ENCODE measurements at regions of chr1 and their contacts with region 1.

Region 1: GRCh38 chr1:207828485-207829158 is 76.8 kb downstream of the CD46 start:
- DNase-seq: peak; percentile 78 to 89
- ATAC-seq: peak; percentile 51 to 64 (median 56)
- H3K4me3 ChIP-seq: no peak overlapping the region
- H3K27ac ChIP-seq: peak overlapping the region; percentile 100
- H3K4me1 ChIP-seq: peaks cover 92% of the 10 kb centered on the region
- H3K27me3 ChIP-seq: no peaks in the 10 kb centered on the region
- CTCF ChIP-seq: peak; percentile 90

Region 2: DNA sequence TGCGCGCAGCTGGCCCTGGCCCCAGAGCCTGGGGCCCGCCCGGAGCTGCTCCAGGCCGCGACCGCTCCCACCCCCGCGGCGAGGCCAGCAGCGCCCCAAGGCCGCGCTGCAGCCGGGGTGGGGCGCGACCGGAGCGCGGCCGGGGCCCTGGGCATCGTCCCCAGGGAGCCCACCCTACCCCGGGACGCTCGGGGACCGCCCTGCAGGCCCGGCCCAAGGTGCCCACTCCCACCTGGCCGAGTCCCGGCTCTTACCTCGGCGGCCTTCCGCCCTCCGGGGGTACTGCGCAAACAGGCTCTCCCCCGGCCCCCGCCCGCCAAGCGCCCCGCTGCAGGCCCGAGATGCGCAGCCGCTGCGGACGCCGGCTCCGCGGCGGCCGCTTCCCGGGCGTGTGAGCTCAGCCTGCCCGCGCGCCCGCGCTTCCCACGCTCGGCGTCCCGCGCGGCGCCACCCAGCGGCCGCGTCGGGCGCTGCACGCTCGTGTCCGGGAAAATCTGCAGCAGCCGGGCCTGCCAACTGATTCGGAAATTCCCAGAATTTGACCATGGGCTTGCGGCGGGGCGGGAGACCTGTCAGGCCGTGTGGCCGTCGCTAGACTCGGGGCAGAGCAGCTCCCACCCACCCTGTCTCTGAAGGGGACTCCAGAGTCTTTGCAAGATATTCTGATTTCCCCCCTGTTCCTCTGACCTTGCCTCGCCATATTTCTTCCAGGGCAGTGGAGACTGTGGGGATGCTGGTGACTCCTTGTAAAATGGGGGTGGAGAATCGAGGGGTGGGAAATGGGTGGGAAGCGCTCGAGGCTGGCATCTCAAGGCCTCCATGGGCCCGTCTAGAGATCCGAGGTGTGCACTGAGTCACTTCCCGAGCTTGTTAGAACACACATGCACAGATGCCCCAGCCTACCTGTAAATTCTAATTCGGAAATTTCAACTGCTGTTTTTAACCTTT is 40.4 kb after region 1 on chr1:
- intact Hi-C with region 1: loop called (anchors 1 to 2 kb)
- DNase-seq: peak; percentile 84 to 86
- ATAC-seq: peak; percentile 82 to 85 (median 84)
- H3K4me3 ChIP-seq: peak overlapping the region; percentile 79
- H3K27ac ChIP-seq: peak overlapping the region; percentile 84
- H3K4me1 ChIP-seq: peaks cover 42% of the 10 kb centered on the region
- H3K27me3 ChIP-seq: no peaks in the 10 kb centered on the region
- CTCF ChIP-seq: peak; percentile 96

Region 3: GRCh38 chr1:208047476-208047934 is 218.9 kb after region 1 on chr1:
- intact Hi-C with region 1: no loop called
- DNase-seq: peak; percentile 85 to 89
- ATAC-seq: peak; percentile 45 to 82 (median 76)
- H3K4me3 ChIP-seq: no peak overlapping the region
- H3K27ac ChIP-seq: peak overlapping the region; percentile 66
- H3K4me1 ChIP-seq: peaks cover 23% of the 10 kb centered on the region
- H3K27me3 ChIP-seq: no peaks in the 10 kb centered on the region
- CTCF ChIP-seq: no peak